ENCODE measurements at regions of chr15 and their contacts with region 1.

Region 1: GRCh38 chr15:65980824-65981456 is 111.6 kb downstream of the RAB11A start:
- DNase-seq: peak; percentile 46
- ATAC-seq: peak; percentile 85 to 88

Region 2: GRCh38 chr15:65426216-65426853 is 554.6 kb before region 1 on chr15:
- intact Hi-C with region 1: no loop called
- DNase-seq: no peak
- ATAC-seq: no peak

Region 3: DNA sequence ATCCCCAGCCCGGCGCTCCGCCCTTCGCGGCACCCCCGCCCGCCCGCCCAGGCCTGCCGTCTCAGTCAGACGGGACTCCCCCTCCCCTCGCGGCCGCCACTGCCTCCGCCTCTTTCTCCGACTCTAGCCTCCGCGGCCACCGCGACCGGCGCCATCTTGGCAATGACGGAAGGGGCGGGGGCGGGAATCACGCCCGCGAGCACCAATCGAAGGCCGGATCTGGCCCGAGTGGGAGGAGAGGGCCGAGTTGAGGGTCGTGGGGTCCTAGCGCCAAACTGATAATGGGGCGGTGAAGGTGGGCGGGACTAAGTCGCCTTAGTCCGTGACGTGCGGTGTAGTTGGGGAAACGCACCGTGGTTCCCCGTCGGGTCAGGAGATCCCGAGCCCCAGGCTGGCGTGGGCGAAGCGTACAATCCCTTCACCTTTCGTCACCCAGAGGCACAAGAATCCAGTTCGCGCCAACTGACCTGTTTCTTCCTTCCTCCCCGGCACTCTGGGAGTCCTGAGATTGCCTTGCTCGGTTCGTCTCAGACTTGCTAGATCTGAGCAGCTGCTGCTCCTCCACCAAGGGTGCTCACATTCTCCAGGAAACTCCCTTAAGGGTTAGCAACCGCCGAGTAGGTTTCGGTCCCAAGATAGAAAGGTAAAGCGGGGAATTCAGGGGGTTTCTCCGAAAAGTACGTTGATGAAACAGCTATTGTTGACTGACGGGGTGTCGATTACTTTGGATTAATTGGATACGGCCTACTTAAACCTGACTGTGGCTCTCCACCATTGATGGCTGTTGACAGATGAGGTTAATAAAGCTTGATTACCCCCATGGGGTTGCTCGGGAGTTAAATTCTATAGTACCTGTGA is 188.6 kb before region 1 on chr15 and contains the start of gene DENND4A:
- intact Hi-C with region 1: no loop called
- DNase-seq: peak; percentile 98
- ATAC-seq: peak; percentile 97
- total RNA-seq, gene DENND4A: 18.1 to 22.9 TPM

Region 4: GRCh38 chr15:66046751-66047150 is 65.8 kb after region 1 on chr15:
- intact Hi-C with region 1: loop called in 1 of 2 experiments (anchors 10 kb)
- DNase-seq: no peak
- ATAC-seq: no peak

Region 5: GRCh38 chr15:66085128-66085527 is 104.2 kb after region 1 on chr15:
- intact Hi-C with region 1: no loop called
- DNase-seq: no peak
- ATAC-seq: no peak

Region 6: DNA sequence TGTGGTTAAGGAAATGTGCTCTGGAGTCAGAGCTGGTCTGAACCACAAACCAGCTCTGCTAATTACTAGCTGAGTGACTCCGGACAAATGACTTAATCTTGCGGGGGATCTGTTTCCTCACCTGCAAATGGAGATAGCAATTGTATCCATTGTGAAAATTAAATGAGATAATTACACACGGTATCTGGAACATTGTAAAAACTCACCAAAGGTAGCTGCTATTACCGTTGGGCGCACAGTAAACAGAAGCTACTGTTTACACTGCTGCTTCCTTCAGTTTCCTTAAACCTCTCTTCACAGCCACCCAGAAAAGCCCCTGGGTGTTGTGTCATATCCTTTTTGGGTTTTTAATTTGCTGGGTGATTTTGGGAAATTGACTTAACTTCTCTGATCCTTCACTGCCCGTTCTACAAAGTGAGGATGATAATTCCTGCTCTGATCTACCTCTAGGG is 164.8 kb after region 1 on chr15:
- intact Hi-C with region 1: loop called in 1 of 2 experiments (anchors 10 kb)
- DNase-seq: no peak
- ATAC-seq: no peak

Region 7: DNA sequence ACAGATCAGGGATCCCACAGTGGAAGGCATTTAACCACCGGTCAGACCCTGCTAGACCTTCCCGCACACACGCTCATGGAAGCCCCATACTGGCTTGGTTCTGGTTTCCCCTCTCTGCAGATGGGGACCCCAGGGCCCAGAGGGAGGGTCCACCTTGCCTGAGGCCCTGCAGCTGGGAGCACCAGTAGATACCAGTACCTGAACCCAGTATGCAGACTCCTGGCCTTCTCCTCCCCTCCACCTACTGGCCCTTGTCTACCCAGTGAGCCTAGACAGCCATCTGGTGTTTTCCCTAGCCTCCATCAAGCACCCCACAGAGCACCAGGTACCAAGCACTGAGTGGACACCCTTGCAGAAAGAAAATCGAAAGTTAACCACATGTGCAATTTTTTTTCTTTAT is 207.5 kb after region 1 on chr15:
- intact Hi-C with region 1: loop called in 1 of 2 experiments (anchors 5 kb)
- DNase-seq: no peak
- ATAC-seq: no peak

Region 8: GRCh38 chr15:66287461-66288057 is 306.6 kb after region 1 on chr15:
- intact Hi-C with region 1: loop called in 1 of 2 experiments (anchors 5 kb)
- DNase-seq: no peak
- ATAC-seq: no peak